Dorsolateral prefrontal cortex (tissue), 120 donors: ENCODE measurements at regions of chr16 and their contacts with region 1.

Region 1: DNA sequence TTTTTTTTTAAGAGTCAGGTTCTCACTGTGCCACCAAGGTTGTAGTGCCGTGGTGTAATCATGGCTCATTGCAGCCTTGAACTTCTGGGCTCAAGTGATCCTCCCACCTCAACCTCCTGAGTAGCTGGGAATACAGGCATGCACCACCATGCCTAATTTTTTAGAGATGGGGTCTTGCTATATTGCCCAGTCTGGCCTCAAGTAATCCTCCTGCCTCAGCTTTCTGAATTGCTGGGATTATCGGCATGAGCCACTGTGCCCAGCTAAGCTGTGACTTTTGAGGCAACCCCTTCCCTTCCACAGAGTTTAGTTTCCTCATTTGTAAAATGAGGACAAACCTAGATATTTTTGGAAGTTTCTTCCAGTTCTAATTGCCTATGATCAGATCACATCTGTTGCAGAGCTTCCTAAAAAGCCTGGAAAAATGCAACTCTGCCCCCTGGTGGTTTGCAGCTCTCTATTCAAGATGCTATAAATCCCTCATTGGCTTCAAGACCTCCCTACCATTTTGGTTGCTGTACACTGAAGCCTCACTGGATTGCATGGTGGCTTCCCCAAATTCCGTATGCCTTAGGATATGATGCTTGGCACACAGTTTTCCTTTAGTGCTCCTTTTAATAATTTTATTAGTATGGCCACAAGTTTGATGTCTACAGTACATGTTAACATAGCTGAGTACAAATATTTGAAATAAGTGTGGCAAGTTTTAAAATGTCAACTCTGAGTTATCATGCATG is 19.3 kb downstream of the GDE1 start:
- DNase-seq: peak; percentile 43 to 90 (median 78)
- H3K4me3 ChIP-seq: no peak overlapping the region
- H3K27ac ChIP-seq: peak overlapping the region in 9 of 59 donors; percentile 7 to 59 (median 22)
- H3K27me3 ChIP-seq: no peaks in the 10 kb centered on the region
- CTCF ChIP-seq: peak; percentile 67 to 92 (median 82)

Region 2: DNA sequence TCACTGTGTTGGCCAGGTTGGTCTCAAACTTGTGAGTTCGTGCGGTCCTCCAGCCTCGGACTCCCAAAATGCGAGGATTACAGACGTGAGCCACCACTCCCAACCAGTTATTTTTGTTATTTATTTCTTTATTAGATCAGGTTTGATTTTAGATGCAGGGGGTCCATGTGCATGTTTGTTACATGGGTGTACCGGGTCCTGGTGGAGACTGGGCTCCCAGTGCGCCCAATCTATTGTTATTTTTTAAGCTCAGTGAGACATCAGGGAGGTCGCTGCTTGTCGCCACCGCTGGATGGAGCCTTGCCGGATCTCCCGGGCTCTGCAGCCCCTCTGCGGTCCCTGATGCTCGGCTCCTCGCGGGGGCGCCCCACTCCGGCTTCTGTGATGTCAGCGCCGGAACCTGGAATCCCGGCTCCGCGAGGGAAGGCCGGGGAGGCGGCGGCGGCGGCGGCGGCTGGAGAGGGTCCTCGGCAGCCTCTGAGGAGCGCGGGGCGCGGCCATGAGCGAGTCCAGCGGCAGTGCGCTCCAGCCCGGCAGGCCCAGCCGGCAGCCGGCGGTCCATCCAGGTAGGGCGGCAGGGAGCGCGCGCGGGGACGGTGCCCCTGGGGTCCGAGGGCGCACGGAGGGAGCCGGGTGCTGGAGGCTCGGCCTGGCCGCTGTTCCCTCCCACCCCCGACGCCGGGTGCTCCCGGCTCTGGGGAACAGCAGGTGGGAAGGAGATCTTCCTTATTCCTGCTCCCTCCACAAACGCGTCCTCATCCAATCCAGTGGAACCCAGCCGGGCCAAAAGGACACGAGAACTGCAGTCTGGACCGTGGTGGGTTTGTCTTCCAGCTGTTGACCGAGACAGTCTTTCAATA is 518.8 kb before region 1 on chr16 and contains the start of gene TMC7:
- intact Hi-C with region 1: loop called in 1 of 2 experiments (anchors 10 kb)
- DNase-seq: peak; percentile 91 to 95 (median 93)
- H3K4me3 ChIP-seq: peak within 1 kb of the TSS; percentile 55 to 95 (median 84)
- H3K27ac ChIP-seq: peak within 1 kb of the TSS; percentile 15 to 98 (median 94)
- H3K27me3 ChIP-seq: no peaks in the 10 kb centered on the region
- CTCF ChIP-seq: peak; percentile 47 to 99 (median 94)
- total RNA-seq, gene TMC7: 4.6 to 56.9 (median 13.3) TPM